H1 (cell line): ENCODE measurements at regions of chr1 and their contacts with region 1.

Region 1: GRCh38 chr1:10677491-10678391 is 118.7 kb downstream of the CASZ1 start:
- DNase-seq: no peak
- H3K4me3 ChIP-seq: no peak overlapping the region
- H3K27ac ChIP-seq: no peak overlapping the region
- H3K4me1 ChIP-seq: peaks cover 4 to 43% (median 33%) of the 10 kb centered on the region in 4 experiments
- H3K27me3 ChIP-seq: no peaks in the 10 kb centered on the region
- CTCF ChIP-seq: no peak
- EP300 ChIP-seq: no peak
- POLR2A ChIP-seq: no peak
- RAD21 ChIP-seq: no peak

Region 2: GRCh38 chr1:10693497-10694273 is 15.9 kb after region 1 on chr1:
- CTCF ChIA-PET with region 1: interaction called, 20 read pairs
- POLR2A ChIA-PET with region 1: interaction called, 5 read pairs
- DNase-seq: peak in 1 of 2 experiments; percentile 59
- H3K4me3 ChIP-seq: peak overlapping the region; percentile 49 to 82 (median 60)
- H3K27ac ChIP-seq: no peak overlapping the region
- H3K4me1 ChIP-seq: peaks cover 0 to 7% (median 4%) of the 10 kb centered on the region in 4 experiments; a peak in 5 of 7 replicates
- H3K27me3 ChIP-seq: peaks cover 0 to 5% (median 2%) of the 10 kb centered on the region in 4 experiments; a peak in 2 of 7 replicates
- CTCF ChIP-seq: no peak
- EP300 ChIP-seq: no peak
- POLR2A ChIP-seq: no peak
- RAD21 ChIP-seq: no peak

Region 3: DNA sequence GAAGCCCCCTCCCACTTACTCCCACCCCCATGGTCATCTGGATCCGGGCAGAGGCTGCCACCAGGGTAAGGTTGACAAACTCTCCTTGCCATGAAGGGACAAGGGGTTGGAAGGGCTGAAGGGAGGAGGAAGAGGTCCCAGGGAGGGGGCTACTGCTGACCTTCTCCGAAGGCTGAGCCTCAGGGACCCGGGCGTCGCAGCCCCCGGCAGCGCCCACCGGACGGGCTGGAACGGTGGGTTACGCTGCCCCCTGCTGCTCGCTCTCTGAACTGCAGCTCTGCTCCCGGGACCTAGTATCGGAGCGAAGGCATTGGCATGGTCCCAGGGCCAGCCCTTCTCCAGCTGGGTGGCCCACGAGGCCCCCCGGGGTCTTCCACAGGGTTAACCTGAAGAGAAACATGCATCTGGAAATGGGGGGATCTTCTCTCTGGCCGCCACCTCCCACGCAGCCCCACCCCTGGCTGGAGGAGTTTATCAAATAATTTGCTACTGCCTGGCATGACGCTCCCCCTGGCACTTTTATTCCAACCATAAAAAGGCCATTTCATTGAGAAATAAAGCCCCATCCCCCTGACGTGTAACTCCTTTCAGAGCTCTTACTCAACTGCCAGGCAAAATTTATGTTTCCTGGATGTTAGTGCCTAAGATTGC is 264.3 kb after region 1 on chr1:
- CTCF ChIA-PET with region 1: interaction called, 10 read pairs
- POLR2A ChIA-PET with region 1: no interaction called
- DNase-seq: peak in 1 of 2 experiments; percentile 99
- H3K4me3 ChIP-seq: peak overlapping the region in 3 of 4 experiments; percentile 20 to 48 (median 32); a peak in 3 of 8 replicates
- H3K27ac ChIP-seq: no peak overlapping the region
- H3K4me1 ChIP-seq: peaks cover 0 to 5% (median 3%) of the 10 kb centered on the region in 4 experiments; a peak in 3 of 7 replicates
- H3K27me3 ChIP-seq: peaks cover 0 to 3% (median 0%) of the 10 kb centered on the region in 4 experiments; a peak in 2 of 7 replicates
- CTCF ChIP-seq: peak in 2 of 3 experiments; percentile 87 to 90; a peak in 3 of 4 replicates
- EP300 ChIP-seq: no peak
- POLR2A ChIP-seq: no peak
- RAD21 ChIP-seq: peak; percentile 89 to 94